Heart left ventricle (tissue), 16 donors: ENCODE measurements at regions of chr7 and their contacts with region 1.

Region 1: DNA sequence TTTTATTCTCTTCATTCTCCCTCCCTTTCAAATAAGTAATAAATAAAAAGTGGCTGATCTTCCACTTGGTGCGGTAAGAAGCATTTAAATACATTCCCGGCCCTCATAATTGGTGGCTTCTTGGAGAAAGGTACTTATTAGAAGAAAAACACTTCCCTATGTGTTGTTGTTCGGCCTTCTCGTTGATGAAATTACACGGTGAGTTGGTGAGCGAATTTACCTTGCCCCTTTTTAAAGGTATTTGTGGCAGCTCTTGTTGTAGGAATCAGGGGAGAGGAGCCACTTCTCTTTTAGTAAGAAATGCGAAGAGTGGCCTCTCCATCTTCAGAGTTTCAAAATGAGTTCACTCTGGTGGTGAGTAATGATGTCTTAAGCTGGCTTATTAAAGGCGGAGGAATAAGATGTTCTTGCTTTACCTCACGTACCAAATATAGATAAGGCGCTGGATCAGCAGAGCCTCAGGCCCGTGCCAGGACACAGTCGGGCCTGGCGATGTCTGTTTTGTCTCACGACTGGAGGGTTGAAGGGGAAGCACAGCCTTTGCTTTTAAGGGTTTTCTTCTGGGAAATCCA is 135.9 kb downstream of the CUX1 start:
- DNase-seq: peak in 2 of 5 donors; percentile 46 to 76
- ATAC-seq: peak in 3 of 4 donors; percentile 46 to 71 (median 65)
- H3K4me3 ChIP-seq: no peak overlapping the region
- H3K27ac ChIP-seq: peak overlapping the region; percentile 31 to 96 (median 84)
- H3K4me1 ChIP-seq: peaks cover 0 to 67% (median 41%) of the 10 kb centered on the region in 12 donors
- H3K27me3 ChIP-seq: no peaks in the 10 kb centered on the region
- CTCF ChIP-seq: no peak
- POLR2A ChIP-seq: no peak

Region 2: DNA sequence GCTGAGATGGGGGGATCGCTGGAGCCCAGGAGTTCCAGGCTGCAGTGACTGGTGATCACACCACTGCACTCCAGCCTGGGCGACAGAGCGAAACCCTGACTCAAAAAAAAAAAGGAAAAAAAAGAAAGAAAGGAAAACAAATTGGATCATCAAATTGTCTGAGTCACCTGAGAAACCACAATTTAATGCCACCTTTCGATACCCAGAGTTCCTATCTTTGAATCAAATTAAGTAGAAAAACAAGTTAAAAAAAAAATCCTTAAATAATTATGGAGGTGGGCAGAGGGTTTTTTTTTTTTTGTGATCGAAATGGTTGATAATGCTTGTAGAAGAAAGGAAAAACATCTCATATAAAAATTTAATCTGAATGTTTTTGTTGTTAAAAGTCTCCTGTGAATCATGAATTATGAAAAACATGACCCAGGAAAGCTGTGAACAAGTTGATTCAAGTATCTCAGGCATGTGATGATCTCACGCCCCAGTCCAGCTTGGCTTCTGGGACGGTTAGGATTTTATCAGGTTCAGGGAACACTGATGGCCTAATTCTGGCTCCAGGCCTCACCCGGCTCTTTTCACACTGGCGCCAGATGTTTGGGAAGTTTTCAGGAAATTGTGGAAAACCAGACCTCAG is 161.2 kb before region 1 on chr7:
- intact Hi-C with region 1: no loop called
- DNase-seq: peak in 4 of 5 donors; percentile 33 to 71 (median 66)
- ATAC-seq: peak; percentile 66 to 96 (median 86)
- H3K4me3 ChIP-seq: no peak overlapping the region
- H3K27ac ChIP-seq: peak overlapping the region in 5 of 12 donors; percentile 5 to 52 (median 25)
- H3K4me1 ChIP-seq: peaks cover 0 to 10% (median 0%) of the 10 kb centered on the region in 12 donors
- H3K27me3 ChIP-seq: no peaks in the 10 kb centered on the region
- CTCF ChIP-seq: no peak
- POLR2A ChIP-seq: no peak

Region 3: GRCh38 chr7:102024769-102025391 is 71.5 kb after region 1 on chr7:
- intact Hi-C with region 1: loop called in 1 of 10 experiments (anchors 10 kb)
- DNase-seq: peak; percentile 32 to 54 (median 38)
- ATAC-seq: peak; percentile 69 to 85 (median 76)
- H3K4me3 ChIP-seq: peak overlapping the region in 1 of 12 donors; percentile 11
- H3K27ac ChIP-seq: peak overlapping the region; percentile 13 to 93 (median 68)
- H3K4me1 ChIP-seq: peaks cover 0 to 20% (median 9%) of the 10 kb centered on the region in 12 donors
- H3K27me3 ChIP-seq: no peaks in the 10 kb centered on the region
- CTCF ChIP-seq: no peak
- POLR2A ChIP-seq: no peak